ENCODE measurements at regions of chr1 and their contacts with region 1.

Region 1: DNA sequence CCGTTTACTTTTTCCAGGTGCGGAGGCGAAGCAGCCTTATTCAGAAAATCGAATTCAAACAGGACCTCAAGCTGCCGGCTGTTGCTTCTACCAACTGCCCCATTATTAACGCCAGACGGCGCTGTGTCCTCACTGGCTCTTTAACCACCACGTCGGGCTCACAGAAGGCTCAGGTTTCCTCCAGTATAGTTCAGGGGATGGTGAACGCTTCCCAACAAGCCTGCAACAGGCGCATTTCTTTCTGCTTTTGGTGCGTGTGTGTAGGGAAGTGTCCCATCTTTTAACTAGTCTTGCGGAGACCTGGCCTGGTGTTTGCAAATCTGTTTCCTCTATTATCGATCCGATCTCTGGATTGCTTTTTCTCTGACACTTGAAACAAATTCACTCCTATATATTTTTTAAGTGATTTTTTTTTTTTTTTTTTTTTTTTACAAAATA is 791 bp upstream of the STUM start:
- H3K4me3 ChIP-seq: no peak overlapping the region
- H3K27ac ChIP-seq: no peak overlapping the region
- H3K4me1 ChIP-seq: peaks cover 27% of the 10 kb centered on the region
- CTCF ChIP-seq: peak; percentile 97

Region 2: GRCh38 chr1:226407497-226408284 is 140.1 kb before region 1 on chr1 and contains the start of gene PARP1:
- CTCF ChIA-PET with region 1: interaction called, 13 read pairs
- POLR2A ChIA-PET with region 1: interaction called, 3 read pairs
- H3K4me3 ChIP-seq: peak within 1 kb of the TSS; percentile 71
- H3K27ac ChIP-seq: peak within 1 kb of the TSS; percentile 95
- H3K4me1 ChIP-seq: peaks cover 23% of the 10 kb centered on the region
- CTCF ChIP-seq: peak; percentile 74

Region 3: DNA sequence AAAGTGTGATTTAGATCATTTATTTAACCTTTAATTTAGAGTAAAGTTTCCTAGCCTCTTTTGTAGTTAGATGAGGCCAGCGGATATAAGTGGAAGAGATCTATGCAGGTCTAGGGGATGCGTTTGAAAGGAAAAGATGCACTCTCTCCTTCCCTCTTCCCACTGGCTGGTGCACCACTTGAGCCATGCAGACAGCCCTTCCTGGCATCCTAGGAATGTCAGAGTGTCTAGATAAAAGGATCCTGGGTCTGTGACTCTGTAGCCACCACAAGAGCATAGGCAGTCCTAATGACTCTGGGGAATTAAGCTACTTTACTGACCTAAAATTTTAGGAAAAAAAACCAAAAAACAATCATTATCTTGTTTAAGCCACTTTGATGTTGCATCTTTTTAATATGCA is 15.2 kb before region 1 on chr1:
- CTCF ChIA-PET with region 1: interaction called, 25 read pairs
- POLR2A ChIA-PET with region 1: interaction called, 6 read pairs
- H3K4me3 ChIP-seq: no peak overlapping the region
- H3K27ac ChIP-seq: no peak overlapping the region
- H3K4me1 ChIP-seq: no peaks in the 10 kb centered on the region
- CTCF ChIP-seq: no peak

Region 4: GRCh38 chr1:226569879-226570547 is 22.2 kb after region 1 on chr1:
- CTCF ChIA-PET with region 1: interaction called, 28 read pairs
- POLR2A ChIA-PET with region 1: interaction called, 5 read pairs
- H3K4me3 ChIP-seq: no peak overlapping the region
- H3K27ac ChIP-seq: no peak overlapping the region
- H3K4me1 ChIP-seq: 0 out of 2 replicates have a peak, but pooled peaks cover 2% of the 10 kb centered on the region
- CTCF ChIP-seq: peak; percentile 76; the same call in 1 of the 2 replicates

Region 5: GRCh38 chr1:226626577-226626956 is 78.8 kb after region 1 on chr1:
- CTCF ChIA-PET with region 1: interaction called, 10 read pairs
- POLR2A ChIA-PET with region 1: no interaction called
- H3K4me3 ChIP-seq: no peak overlapping the region
- H3K27ac ChIP-seq: no peak overlapping the region
- H3K4me1 ChIP-seq: no peaks in the 10 kb centered on the region
- CTCF ChIP-seq: peak; percentile 86

Measured in HEK293 (cell line).